Colonic mucosa (tissue), 4 donors: ENCODE measurements at regions of chr11 and their contacts with region 1.

Region 1: GRCh38 chr11:134139873-134140331 is 71.0 kb downstream of the JAM3 start:
- DNase-seq: peak; percentile 61
- H3K4me3 ChIP-seq: no peak overlapping the region
- H3K27ac ChIP-seq: no peak overlapping the region
- H3K4me1 ChIP-seq: no peaks in the 10 kb centered on the region
- H3K27me3 ChIP-seq: no peaks in the 10 kb centered on the region
- CTCF ChIP-seq: peak; percentile 67

Region 2: GRCh38 chr11:133927690-133928627 is 211.9 kb before region 1 on chr11:
- intact Hi-C with region 1: loop called (anchors 2 kb)
- DNase-seq: peak; percentile 81
- H3K4me3 ChIP-seq: peak overlapping the region; percentile 28
- H3K27ac ChIP-seq: no peak overlapping the region
- H3K4me1 ChIP-seq: peaks cover 6% of the 10 kb centered on the region
- H3K27me3 ChIP-seq: no peaks in the 10 kb centered on the region
- CTCF ChIP-seq: peak; percentile 83

Region 3: GRCh38 chr11:134050541-134051383 is 89.1 kb before region 1 on chr11:
- intact Hi-C with region 1: loop called (anchors 2 kb)
- DNase-seq: peak; percentile 87
- H3K4me3 ChIP-seq: peak overlapping the region; percentile 25
- H3K27ac ChIP-seq: peak overlapping the region; percentile 52
- H3K4me1 ChIP-seq: no peaks in the 10 kb centered on the region
- H3K27me3 ChIP-seq: no peaks in the 10 kb centered on the region
- CTCF ChIP-seq: peak; percentile 91